ENCODE measurements at regions of chr10 and their contacts with region 1.

Region 1: DNA sequence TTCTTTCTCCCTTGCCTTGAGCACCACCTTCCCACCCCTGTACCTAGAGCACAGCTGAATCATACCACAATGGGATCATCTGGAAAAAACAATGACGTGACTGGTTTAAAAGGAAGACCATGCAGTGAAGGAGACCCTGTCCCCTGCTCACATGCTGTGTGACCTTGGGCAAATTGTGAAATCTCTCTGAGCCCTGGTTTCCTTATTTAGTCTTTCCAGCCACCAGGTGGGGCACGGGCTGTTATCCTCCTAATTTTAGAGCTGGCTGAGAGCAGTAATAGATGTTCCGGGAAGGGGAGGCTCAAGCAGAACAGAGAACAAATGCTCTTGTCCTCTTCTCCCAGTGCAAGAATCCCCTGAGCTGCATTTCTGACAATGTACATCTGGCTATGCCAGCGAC is 198.3 kb downstream of the RPS24 start:
- DNase-seq: no peak
- ATAC-seq: peak; percentile 56
- H3K4me3 Mint-ChIP-seq: no peak overlapping the region
- H3K27ac Mint-ChIP-seq: no peak overlapping the region
- H3K4me1 Mint-ChIP-seq: peaks cover 4% of the 10 kb centered on the region; the same call in 1 of the 2 replicates
- H3K27me3 Mint-ChIP-seq: no peaks in the 10 kb centered on the region
- CTCF ChIP-seq: no peak

Region 2: GRCh38 chr10:78004215-78005026 is 227.5 kb before region 1 on chr10:
- CTCF ChIA-PET with region 1: no interaction called
- POLR2A ChIA-PET with region 1: no interaction called
- DNase-seq: no peak
- ATAC-seq: no peak
- H3K4me3 Mint-ChIP-seq: no peak overlapping the region
- H3K27ac Mint-ChIP-seq: no peak overlapping the region
- H3K4me1 Mint-ChIP-seq: no peaks in the 10 kb centered on the region
- H3K27me3 Mint-ChIP-seq: no peaks in the 10 kb centered on the region
- CTCF ChIP-seq: no peak

Region 3: GRCh38 chr10:78302989-78303854 is 71.3 kb after region 1 on chr10:
- CTCF ChIA-PET with region 1: interaction called, 11 read pairs
- POLR2A ChIA-PET with region 1: no interaction called
- DNase-seq: peak; percentile 96
- ATAC-seq: peak; percentile 91
- H3K4me3 Mint-ChIP-seq: peak overlapping the region; percentile 82
- H3K27ac Mint-ChIP-seq: peak overlapping the region; percentile 85
- H3K4me1 Mint-ChIP-seq: peaks cover 31% of the 10 kb centered on the region
- H3K27me3 Mint-ChIP-seq: no peaks in the 10 kb centered on the region; the same call in 1 of the 2 replicates
- CTCF ChIP-seq: peak; percentile 53

Measured in WTC11 (cell line).